ENCODE measurements at regions of chr5 and their contacts with region 1.

Region 1: GRCh38 chr5:170173235-170173634 is 59.5 kb upstream of the C5orf58 start:
- DNase-seq: no peak
- H3K4me3 ChIP-seq: no peak overlapping the region
- H3K27ac ChIP-seq: no peak overlapping the region
- H3K4me1 ChIP-seq: no peaks in the 10 kb centered on the region
- H3K27me3 ChIP-seq: no peaks in the 10 kb centered on the region
- CTCF ChIP-seq: no peak
- POLR2A ChIP-seq: no peak

Region 2: GRCh38 chr5:170105642-170106611 is 67.3 kb before region 1 on chr5 and contains the start of gene FOXI1:
- intact Hi-C with region 1: loop called in 1 of 2 experiments (anchors 5 kb)
- DNase-seq: peak in 3 of 7 donors; percentile 7 to 38 (median 12)
- H3K4me3 ChIP-seq: no peak within 1 kb of the TSS
- H3K27ac ChIP-seq: no peak within 1 kb of the TSS
- H3K4me1 ChIP-seq: no peaks in the 10 kb centered on the region
- H3K27me3 ChIP-seq: no peaks in the 10 kb centered on the region
- CTCF ChIP-seq: no peak
- POLR2A ChIP-seq: no peak
- total RNA-seq, gene FOXI1: not detected

Measured in adrenal gland (tissue), 19 donors.